Right cardiac atrium (tissue), 5 donors: ENCODE measurements at regions of chr17 and their contacts with region 1.

Region 1: GRCh38 chr17:29807520-29808351 is 122.3 kb downstream of the SSH2 start:
- DNase-seq: peak; percentile 50 to 62 (median 57)
- ATAC-seq: peak; percentile 72 to 76
- H3K4me3 ChIP-seq: no peak overlapping the region
- H3K27ac ChIP-seq: no peak overlapping the region
- H3K4me1 ChIP-seq: no peaks in the 10 kb centered on the region
- H3K27me3 ChIP-seq: no peaks in the 10 kb centered on the region

Region 2: DNA sequence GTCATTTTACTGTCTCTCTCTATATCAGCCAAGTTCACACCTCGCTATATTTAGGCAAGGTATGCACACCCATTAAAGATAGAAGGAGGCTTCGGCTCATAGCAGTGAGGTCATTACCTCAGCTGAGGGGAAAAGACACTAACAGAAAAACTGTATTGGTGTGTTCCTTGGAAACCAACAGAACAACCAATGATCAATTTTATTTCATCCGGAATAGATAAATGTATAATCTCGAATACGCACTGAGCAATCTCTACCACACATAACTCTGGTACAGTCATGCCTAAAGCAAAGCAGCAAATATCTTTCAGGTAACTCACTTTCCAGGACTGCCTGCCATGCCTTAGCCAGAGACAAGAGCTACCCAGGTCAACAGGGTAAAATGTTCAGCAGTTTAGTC is 75.1 kb before region 1 on chr17:
- intact Hi-C with region 1: no loop called
- DNase-seq: no peak
- ATAC-seq: peak; percentile 83 to 90
- H3K4me3 ChIP-seq: no peak overlapping the region
- H3K27ac ChIP-seq: peak overlapping the region; percentile 96
- H3K4me1 ChIP-seq: peaks cover 2% of the 10 kb centered on the region
- H3K27me3 ChIP-seq: no peaks in the 10 kb centered on the region

Region 3: GRCh38 chr17:29931231-29931932 is 123.6 kb after region 1 on chr17:
- intact Hi-C with region 1: loop called (anchors 2 to 10 kb)
- DNase-seq: peak; percentile 48 to 72 (median 63)
- ATAC-seq: peak; percentile 77 to 79
- H3K4me3 ChIP-seq: peak overlapping the region; percentile 84
- H3K27ac ChIP-seq: no peak overlapping the region
- H3K4me1 ChIP-seq: no peaks in the 10 kb centered on the region
- H3K27me3 ChIP-seq: no peaks in the 10 kb centered on the region

Region 4: DNA sequence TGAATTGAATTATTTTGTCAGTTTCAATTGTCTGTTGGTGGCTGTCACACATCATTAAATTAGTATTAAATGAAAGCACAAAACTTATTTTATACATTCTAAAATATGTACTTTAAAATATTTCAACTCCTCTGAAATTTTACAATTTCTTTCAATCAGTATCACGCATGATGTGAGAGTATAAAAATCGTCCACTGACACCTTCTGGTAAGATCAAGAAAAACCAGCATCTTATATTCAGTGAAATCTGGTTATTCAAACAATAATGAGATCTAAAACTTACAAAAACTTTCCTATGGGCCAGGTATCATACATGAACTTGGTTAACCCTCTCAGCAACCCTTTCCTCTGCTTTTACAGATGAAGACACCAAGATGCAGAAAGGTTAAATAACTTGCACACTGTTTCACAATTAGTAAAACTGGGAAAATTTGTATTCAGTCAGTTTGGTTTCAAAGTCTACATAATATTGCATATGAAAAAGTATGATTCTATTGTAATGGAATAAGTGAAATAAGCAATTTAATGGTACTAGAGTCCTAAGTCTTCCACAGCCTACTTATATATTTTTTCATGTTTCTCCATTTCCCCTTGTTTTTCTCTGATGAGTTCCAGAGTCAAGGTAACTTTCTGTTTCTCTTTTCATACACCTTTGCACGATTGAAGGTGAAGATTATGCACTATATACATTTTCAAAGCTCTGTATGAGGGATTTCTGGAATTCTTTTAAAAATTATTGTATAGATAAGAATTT is 192.4 kb after region 1 on chr17:
- intact Hi-C with region 1: loop called in 1 of 4 experiments (anchors 10 kb)
- DNase-seq: no peak
- ATAC-seq: no peak
- H3K4me3 ChIP-seq: no peak overlapping the region
- H3K27ac ChIP-seq: no peak overlapping the region
- H3K4me1 ChIP-seq: no peaks in the 10 kb centered on the region
- H3K27me3 ChIP-seq: no peaks in the 10 kb centered on the region

Region 5: GRCh38 chr17:30093463-30094147 is 285.9 kb after region 1 on chr17:
- intact Hi-C with region 1: loop called in 1 of 4 experiments (anchors 10 kb)
- DNase-seq: peak in 1 of 3 donors; percentile 31
- ATAC-seq: peak; percentile 52 to 67
- H3K4me3 ChIP-seq: no peak overlapping the region
- H3K27ac ChIP-seq: no peak overlapping the region
- H3K4me1 ChIP-seq: no peaks in the 10 kb centered on the region
- H3K27me3 ChIP-seq: no peaks in the 10 kb centered on the region